HepG2 (cell line): ENCODE measurements at regions of chr11 and their contacts with region 1.

Region 1: GRCh38 chr11:65497141-65498041 is 1.5 kb upstream of the MALAT1 start:
- DNase-seq: peak; percentile 95
- ATAC-seq: peak; percentile 88
- H3K4me3 ChIP-seq: peak overlapping the region; percentile 85 to 93 (median 89)
- H3K27ac ChIP-seq: peak overlapping the region; percentile 100
- H3K4me1 ChIP-seq: peaks cover 37% of the 10 kb centered on the region
- H3K27me3 ChIP-seq: no peaks in the 10 kb centered on the region; a peak in 2 of 5 replicates
- CTCF ChIP-seq: peak; percentile 36
- EP300 ChIP-seq: peak; percentile 62 to 85; a peak in 3 of 4 replicates
- POLR2A ChIP-seq: peak; percentile 60 to 84
- RAD21 ChIP-seq: peak; percentile 76

Region 2: DNA sequence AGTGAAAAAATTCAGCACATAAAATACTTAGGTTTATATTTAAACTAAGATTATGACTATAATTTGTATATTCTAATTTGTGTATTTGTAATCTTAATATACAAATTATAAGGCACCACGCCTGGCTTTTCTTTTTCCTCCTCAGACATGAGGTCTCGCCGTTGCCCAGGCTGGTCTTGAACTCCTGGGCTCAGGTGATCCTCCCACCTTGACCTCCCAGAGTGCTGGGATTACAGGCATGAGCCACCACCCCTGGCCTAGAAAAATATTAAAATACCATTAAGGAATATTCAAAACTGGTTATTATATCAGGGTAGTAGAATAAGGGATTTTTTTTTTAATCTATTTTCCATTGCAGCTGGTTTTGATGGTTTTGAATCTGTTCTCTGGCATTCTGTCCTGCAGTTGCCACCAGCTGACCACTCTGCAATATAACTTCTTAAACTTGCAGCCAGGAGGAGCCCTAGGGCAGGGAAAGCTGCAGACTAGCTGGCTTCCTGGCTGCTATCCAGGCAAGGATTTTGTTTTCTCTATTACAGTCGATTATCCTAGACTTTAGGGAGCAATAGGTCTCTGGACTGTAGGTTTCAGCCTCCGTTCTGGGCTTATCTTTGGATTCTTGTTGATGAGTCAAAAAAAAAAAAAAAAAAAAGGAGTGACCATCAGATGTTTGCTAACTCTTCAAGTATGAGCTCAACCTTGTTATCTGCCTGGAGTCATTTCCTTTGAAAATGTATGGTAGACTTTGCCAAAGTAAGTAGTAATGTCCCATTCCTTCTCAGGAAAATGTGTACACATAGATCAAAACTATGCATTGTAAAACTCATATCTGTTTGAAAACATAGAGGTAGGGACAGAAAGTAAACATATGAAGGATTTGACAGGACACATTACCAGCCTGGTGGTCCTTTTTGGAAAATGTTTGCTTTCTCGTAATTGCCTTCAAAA is 222.4 kb before region 1 on chr11:
- CTCF ChIA-PET with region 1: no interaction called
- POLR2A ChIA-PET with region 1: interaction called, 11 read pairs
- in situ Hi-C with region 1: no loop called
- intact Hi-C with region 1: no loop called
- DNase-seq: peak; percentile 89
- ATAC-seq: peak; percentile 92
- H3K4me3 ChIP-seq: peak overlapping the region in 1 of 3 experiments; percentile 17; a peak in 2 of 6 replicates
- H3K27ac ChIP-seq: peak overlapping the region; percentile 30
- H3K4me1 ChIP-seq: peaks cover 30% of the 10 kb centered on the region
- H3K27me3 ChIP-seq: no peaks in the 10 kb centered on the region
- CTCF ChIP-seq: peak; percentile 93
- EP300 ChIP-seq: no peak
- POLR2A ChIP-seq: no peak
- RAD21 ChIP-seq: peak; percentile 95

Region 3: GRCh38 chr11:65354265-65355012 is 143.0 kb before region 1 on chr11 and contains the start of gene TIGD3:
- CTCF ChIA-PET with region 1: no interaction called
- POLR2A ChIA-PET with region 1: interaction called, 32 read pairs
- in situ Hi-C with region 1: no loop called
- intact Hi-C with region 1: no loop called
- DNase-seq: peak; percentile 92
- ATAC-seq: peak; percentile 79
- H3K4me3 ChIP-seq: peak within 1 kb of the TSS; percentile 70 to 82 (median 77)
- H3K27ac ChIP-seq: peak within 1 kb of the TSS; percentile 64
- H3K4me1 ChIP-seq: peaks cover 42% of the 10 kb centered on the region
- H3K27me3 ChIP-seq: no peaks in the 10 kb centered on the region
- CTCF ChIP-seq: peak; percentile 33
- EP300 ChIP-seq: no peak
- POLR2A ChIP-seq: peak; percentile 45 to 92
- RAD21 ChIP-seq: 0 out of 2 replicates have a peak, but pooled peaks have one; percentile 15
- total RNA-seq, gene TIGD3: 4.0 and 4.9 TPM in 2 replicates

Region 4: DNA sequence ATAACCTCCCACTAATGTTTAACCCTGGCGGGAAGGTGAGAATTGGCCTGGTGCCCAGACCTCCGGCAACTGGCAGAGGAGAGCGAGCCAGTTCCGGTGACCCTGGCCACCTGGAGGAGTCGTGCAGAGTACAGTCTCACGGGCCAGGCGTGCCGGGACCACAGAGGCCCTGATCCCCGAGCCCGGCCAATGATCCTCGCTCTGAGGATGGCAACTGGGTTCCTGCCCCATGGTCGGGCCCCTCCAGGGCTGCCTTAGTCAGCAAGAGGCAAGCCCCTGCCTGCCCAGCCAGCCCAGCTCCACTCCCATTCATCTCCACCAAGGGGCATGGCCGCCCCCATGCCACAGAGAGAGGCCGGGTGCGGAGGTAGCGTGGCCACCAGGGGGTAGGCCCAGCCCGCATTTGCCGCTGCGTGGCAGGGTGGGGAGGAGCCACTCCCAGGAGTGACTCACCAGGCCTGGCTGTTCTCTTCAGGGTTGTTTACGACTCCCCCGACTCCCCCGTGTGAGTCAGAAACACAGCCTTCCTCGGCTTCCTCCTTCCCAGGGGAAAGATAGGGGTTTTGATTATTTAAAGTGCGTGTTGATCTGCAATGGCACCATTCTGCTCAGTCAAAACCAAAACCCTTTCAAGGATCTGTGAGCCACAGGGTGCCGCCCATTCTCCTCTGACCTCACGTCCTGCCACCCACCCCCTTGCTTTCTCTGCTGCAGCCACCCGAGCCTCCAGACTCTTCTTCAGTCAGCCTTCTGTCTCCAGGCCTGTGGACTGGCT is 115.2 kb before region 1 on chr11 and contains the start of gene SLC25A45:
- CTCF ChIA-PET with region 1: no interaction called
- POLR2A ChIA-PET with region 1: interaction called, 49 read pairs
- in situ Hi-C with region 1: no loop called
- intact Hi-C with region 1: no loop called
- DNase-seq: peak; percentile 87
- ATAC-seq: peak; percentile 80
- H3K4me3 ChIP-seq: peak within 1 kb of the TSS; percentile 57 to 82 (median 65)
- H3K27ac ChIP-seq: peak within 1 kb of the TSS; percentile 88
- H3K4me1 ChIP-seq: peaks cover 89% of the 10 kb centered on the region
- H3K27me3 ChIP-seq: no peaks in the 10 kb centered on the region; a peak in 1 of 5 replicates
- CTCF ChIP-seq: peak; percentile 94
- EP300 ChIP-seq: peak in 1 of 2 experiments; percentile 76; a peak in 2 of 4 replicates
- POLR2A ChIP-seq: peak in 1 of 2 experiments; percentile 84; a peak in 2 of 4 replicates
- RAD21 ChIP-seq: peak; percentile 95
- total RNA-seq, gene SLC25A45: 2.1 and 3.4 TPM in 2 replicates

Region 5: DNA sequence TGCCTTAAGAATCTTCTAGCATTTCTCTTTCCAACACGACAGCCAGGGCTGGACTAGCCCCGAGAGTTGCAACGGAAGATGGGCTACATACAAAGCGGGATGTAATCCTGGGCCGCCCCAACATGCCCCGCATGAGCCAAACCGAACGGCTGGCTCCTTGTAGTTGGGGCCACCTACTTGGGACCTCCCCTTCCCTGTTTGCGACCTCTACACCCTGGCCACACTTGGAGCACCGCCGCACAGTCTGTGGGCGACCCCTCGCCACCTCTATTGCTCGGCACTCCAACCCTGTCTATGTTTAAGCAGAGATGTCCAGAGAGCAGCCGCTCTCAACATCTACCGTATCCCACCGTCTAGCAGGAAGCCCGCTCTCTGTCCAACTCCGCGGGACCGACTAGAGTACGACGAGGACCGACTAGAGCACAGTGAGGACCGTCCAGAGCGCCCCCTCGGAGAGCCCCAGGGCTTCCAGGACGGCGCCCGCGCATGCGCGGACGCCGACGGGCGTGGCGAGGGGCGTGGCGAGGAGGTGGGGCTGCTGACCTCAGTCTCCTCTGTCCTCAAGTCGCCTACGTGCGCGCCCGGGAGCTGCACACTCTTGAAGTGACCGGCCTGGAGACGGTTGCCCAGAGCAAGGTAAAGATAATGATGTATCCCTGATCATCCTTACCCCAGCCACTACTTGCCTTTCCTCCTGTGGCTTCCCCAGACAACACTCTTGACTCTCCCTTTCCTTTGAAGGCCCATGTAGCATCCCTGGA is 42.5 kb before region 1 on chr11:
- CTCF ChIA-PET with region 1: no interaction called
- POLR2A ChIA-PET with region 1: interaction called, 55 read pairs
- in situ Hi-C with region 1: loop called (anchors 10 kb)
- intact Hi-C with region 1: no loop called
- DNase-seq: peak; percentile 80
- ATAC-seq: peak; percentile 80
- H3K4me3 ChIP-seq: peak overlapping the region; percentile 56 to 75 (median 61)
- H3K27ac ChIP-seq: no peak overlapping the region
- H3K4me1 ChIP-seq: peaks cover 60% of the 10 kb centered on the region
- H3K27me3 ChIP-seq: no peaks in the 10 kb centered on the region
- CTCF ChIP-seq: peak; percentile 69
- EP300 ChIP-seq: no peak
- POLR2A ChIP-seq: peak; percentile 41 to 95; a peak in 3 of 4 replicates
- RAD21 ChIP-seq: no peak

Region 6: DNA sequence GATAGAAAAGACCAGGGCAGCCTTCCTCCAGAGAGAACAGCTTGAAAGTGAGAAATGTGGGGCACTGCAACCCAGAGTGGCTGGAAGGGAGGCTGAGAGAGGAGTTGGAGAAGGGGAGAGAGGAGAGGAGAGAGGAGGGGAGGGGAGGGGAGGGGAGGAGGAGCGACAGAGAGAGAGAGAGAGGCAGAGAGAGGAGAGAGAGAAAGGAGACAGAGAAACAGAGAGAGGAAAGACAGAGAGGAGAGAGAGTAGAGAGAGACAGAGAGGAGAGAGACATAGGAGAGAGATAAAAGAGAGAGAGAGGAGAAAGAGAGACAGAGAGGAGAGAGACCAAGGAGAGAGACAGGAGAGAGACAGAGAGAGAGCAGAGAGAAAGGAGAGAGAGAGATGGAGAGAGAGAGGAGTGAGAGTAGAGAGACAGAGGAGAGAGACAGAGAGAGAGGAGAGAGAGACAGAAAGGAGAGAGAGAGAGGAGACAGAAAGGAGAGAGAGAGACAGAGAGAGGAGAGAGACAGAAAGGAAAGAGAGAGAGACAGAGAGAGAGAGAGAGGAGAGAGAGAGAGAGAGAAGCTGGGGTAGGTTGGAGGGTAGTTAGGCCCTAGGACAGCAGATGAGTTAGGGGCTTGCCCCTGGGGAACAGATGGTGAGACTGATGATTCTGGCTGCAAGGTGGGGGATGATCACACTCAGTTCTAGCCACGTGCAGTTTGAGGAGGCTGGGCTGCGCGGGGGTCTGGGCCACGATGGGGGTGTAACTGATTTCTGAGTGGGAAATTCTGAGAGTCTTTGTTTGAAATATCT is 18.9 kb after region 1 on chr11:
- CTCF ChIA-PET with region 1: no interaction called
- POLR2A ChIA-PET with region 1: interaction called, 12 read pairs
- in situ Hi-C with region 1: no loop called
- intact Hi-C with region 1: no loop called
- DNase-seq: no peak
- ATAC-seq: peak; percentile 61
- H3K4me3 ChIP-seq: no peak overlapping the region
- H3K27ac ChIP-seq: no peak overlapping the region
- H3K4me1 ChIP-seq: peaks cover 19% of the 10 kb centered on the region
- H3K27me3 ChIP-seq: no peaks in the 10 kb centered on the region
- CTCF ChIP-seq: no peak
- EP300 ChIP-seq: no peak
- POLR2A ChIP-seq: no peak
- RAD21 ChIP-seq: no peak

Region 7: DNA sequence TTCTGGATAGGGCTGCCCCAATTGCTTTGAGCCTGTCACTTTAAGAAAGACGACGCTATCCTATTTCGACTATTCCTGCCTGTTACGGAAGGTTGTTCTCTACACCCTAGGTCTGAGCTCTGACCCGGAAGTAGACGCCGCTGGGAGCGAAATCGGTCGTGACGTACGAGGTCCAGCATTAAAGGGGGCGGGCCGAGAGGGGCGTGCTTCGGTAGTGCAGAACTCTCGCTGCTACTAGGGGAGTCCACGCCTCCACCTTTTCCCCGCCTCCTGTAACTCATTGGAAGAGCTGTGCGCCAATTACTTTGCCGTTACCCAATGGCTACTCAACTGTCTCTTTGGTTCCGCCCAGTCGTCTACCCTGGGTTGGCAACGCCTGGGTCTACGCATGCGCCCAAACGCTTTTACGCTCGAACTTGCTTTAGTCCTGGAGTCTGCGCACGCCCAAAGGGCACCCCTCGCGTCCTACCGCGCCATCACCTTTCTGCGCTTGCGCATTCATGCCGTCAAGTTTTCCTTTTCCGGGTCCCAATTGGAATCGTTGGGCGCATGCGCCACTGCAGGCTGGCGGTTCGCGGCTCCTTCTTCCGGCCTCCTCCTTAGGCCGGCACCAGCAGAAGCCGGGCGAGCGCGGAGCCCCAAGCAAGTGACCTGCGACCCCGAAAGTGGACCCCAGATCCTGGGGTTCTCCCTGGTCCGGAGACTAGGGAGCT is 118.0 kb after region 1 on chr11 and contains the start of gene PCNX3:
- CTCF ChIA-PET with region 1: no interaction called
- POLR2A ChIA-PET with region 1: interaction called, 15 read pairs
- in situ Hi-C with region 1: no loop called
- intact Hi-C with region 1: no loop called
- DNase-seq: peak; percentile 100
- ATAC-seq: peak; percentile 72
- H3K4me3 ChIP-seq: peak within 1 kb of the TSS; percentile 90 to 97 (median 94)
- H3K27ac ChIP-seq: peak within 1 kb of the TSS; percentile 92
- H3K4me1 ChIP-seq: peaks cover 41% of the 10 kb centered on the region
- H3K27me3 ChIP-seq: no peaks in the 10 kb centered on the region; a peak in 1 of 5 replicates
- CTCF ChIP-seq: 0 out of 2 replicates have a peak, but pooled peaks have one; percentile 9
- EP300 ChIP-seq: 0 out of 4 replicates have a peak, but pooled peaks of 1 of the 2 experiments have one; percentile 27
- POLR2A ChIP-seq: peak in 1 of 2 experiments; percentile 44; a peak in 2 of 4 replicates
- RAD21 ChIP-seq: no peak
- total RNA-seq, gene PCNX3: 14.5 and 23.0 TPM in 2 replicates